Mammary epithelial cell (primary cell): ENCODE measurements at regions of chr1 and their contacts with region 1.

Region 1: GRCh38 chr1:222713091-222713961 is 962 bp downstream of the BROX start:
- DNase-seq: peak; percentile 94
- H3K4me3 ChIP-seq: peak overlapping the region; percentile 57 to 93 (median 70)
- H3K27ac ChIP-seq: peak overlapping the region; percentile 96
- H3K4me1 ChIP-seq: peaks cover 13% of the 10 kb centered on the region
- H3K27me3 ChIP-seq: no peaks in the 10 kb centered on the region
- CTCF ChIP-seq: no peak

Region 2: DNA sequence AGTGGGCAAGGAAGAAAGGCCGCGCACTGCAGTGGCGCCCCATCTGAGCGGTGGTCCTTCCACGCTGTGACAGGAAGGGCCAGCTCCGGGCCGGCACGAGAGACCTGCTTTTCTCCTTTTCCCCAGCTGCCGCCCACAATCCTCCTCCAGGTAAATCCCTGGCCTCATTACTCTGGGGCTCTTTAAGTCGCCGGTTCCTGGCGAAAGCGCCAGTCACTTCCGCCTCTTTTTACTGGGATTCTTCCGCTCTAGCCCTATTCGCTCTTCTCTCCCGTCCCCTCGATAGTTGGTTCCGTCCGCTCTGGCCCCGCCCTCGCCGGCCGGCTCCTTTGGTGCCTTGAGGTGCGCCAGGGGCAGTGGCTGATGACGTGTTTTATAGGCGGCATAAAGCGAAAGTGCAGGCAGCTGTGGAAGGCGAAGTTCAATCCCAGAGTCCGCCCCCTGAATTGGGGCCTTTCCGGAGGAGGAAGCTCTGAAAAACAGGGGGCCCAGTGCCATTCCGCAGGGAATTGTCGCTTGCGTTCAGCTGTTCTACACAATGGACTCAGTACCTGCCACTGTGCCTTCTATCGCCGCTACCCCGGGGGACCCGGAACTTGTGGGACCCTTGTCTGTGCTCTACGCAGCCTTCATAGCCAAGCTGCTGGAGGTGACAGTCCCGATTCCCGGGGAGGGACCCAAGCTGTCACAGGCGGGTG is 69.2 kb before region 1 on chr1:
- CTCF ChIA-PET with region 1: no interaction called
- dilution Hi-C with region 1: no loop called
- in situ Hi-C with region 1: no loop called
- intact Hi-C with region 1: loop called (anchors 5 kb)
- DNase-seq: peak; percentile 99
- H3K4me3 ChIP-seq: peak overlapping the region; percentile 66 to 95 (median 76)
- H3K27ac ChIP-seq: peak overlapping the region; percentile 87
- H3K4me1 ChIP-seq: peaks cover 5% of the 10 kb centered on the region
- H3K27me3 ChIP-seq: no peaks in the 10 kb centered on the region
- CTCF ChIP-seq: no peak